Activated CD4-positive, alpha-beta memory T cell treated with anti-CD3 and anti-CD28 coated beads for 36 hours (primary cell): ENCODE measurements at regions of chr20 and their contacts with region 1.

Region 1: GRCh38 chr20:59159493-59160376 is 3.9 kb upstream of the ZNF831 start:
- DNase-seq: peak; percentile 80
- H3K4me3 Mint-ChIP-seq: peak overlapping the region; percentile 83
- H3K27ac Mint-ChIP-seq: peak overlapping the region; percentile 96
- H3K4me1 Mint-ChIP-seq: peaks cover 87% of the 10 kb centered on the region
- H3K27me3 Mint-ChIP-seq: no peaks in the 10 kb centered on the region

Region 2: GRCh38 chr20:59042796-59043660 is 116.7 kb before region 1 on chr20:
- CTCF ChIA-PET with region 1: no interaction called
- POLR2A ChIA-PET with region 1: no interaction called
- intact Hi-C with region 1: loop called (anchors 2 kb)
- DNase-seq: peak; percentile 96
- H3K4me3 Mint-ChIP-seq: peak overlapping the region; percentile 92
- H3K27ac Mint-ChIP-seq: peak overlapping the region; percentile 88
- H3K4me1 Mint-ChIP-seq: peaks cover 55% of the 10 kb centered on the region
- H3K27me3 Mint-ChIP-seq: no peaks in the 10 kb centered on the region

Region 3: DNA sequence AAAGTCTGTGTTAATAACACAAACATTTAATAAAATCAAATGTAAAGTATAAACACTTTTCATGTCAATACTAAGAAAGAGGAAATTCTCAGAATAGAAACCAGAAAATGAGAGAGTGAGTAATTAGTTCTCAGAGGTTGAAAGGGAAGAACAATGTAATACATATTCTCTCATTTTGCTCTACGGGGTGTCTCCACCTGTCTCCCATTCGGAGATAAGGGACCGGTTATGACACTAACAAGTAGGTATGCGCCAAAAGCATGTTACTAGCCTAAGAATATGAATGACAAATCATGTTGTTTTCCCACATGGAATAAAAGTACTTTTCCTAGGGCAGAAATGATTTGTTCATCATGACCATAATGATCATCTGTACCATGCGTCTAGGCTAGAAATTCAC is 81.5 kb before region 1 on chr20:
- CTCF ChIA-PET with region 1: no interaction called
- POLR2A ChIA-PET with region 1: no interaction called
- intact Hi-C with region 1: no loop called
- DNase-seq: no peak
- H3K4me3 Mint-ChIP-seq: no peak overlapping the region
- H3K27ac Mint-ChIP-seq: no peak overlapping the region
- H3K4me1 Mint-ChIP-seq: peaks cover 45% of the 10 kb centered on the region
- H3K27me3 Mint-ChIP-seq: peaks cover 23% of the 10 kb centered on the region

Region 4: GRCh38 chr20:59120491-59120890 is 39.2 kb before region 1 on chr20:
- CTCF ChIA-PET with region 1: interaction called, 15 read pairs
- POLR2A ChIA-PET with region 1: interaction called, 22 read pairs
- intact Hi-C with region 1: no loop called
- DNase-seq: peak; percentile 65
- H3K4me3 Mint-ChIP-seq: no peak overlapping the region
- H3K27ac Mint-ChIP-seq: peak overlapping the region; percentile 94
- H3K4me1 Mint-ChIP-seq: peaks cover 71% of the 10 kb centered on the region
- H3K27me3 Mint-ChIP-seq: no peaks in the 10 kb centered on the region

Region 5: DNA sequence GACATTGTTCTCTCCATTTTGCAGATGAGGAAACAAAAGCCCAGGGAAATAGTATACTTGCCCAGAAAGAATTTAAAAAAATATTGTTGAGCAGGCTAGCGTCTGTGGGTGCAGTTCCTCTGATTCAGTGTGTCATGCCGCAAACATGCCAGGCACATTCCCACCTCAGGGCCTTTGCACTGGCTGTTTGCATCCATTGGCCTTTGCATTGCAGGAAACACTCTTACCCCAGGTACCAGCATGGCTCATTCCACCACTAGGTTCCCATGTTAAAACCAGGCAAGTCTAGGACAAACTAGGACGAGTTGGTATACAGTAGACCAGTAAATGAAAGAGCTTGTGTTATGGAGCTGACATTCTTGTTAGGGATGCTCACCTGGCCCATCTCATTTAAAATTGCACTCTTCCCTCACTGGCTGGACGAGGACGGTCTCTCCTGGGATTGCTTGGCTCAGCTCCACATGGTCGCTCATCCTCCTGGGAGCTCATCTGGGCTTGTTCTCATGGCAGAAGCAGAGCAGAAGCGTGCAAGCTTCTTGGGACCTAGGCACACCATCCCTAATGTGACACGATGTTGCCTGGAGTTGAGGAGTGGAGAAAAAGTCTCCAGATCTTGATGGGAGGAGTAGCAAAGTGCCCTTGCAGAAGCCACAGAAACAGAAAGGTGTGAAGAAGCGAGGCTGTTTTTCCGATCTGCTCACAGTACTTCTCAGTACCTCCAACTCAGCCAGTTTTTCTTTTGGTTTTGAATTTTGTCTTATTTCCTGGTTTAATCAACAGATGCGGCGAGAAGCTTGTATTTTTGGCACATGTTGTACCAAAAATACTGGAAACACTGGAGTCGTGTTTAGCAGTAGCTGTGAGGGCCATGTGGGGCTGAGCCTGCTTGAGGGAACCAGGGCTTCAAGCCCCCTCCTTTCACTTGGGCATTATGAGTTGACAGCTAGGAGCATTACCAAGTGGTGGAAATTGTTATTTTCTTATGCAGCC is 17.8 kb after region 1 on chr20:
- CTCF ChIA-PET with region 1: interaction called, 5 read pairs
- POLR2A ChIA-PET with region 1: interaction called, 12 read pairs
- intact Hi-C with region 1: no loop called
- DNase-seq: peak; percentile 63
- H3K4me3 Mint-ChIP-seq: peak overlapping the region; percentile 67
- H3K27ac Mint-ChIP-seq: peak overlapping the region; percentile 93
- H3K4me1 Mint-ChIP-seq: peaks cover 84% of the 10 kb centered on the region
- H3K27me3 Mint-ChIP-seq: no peaks in the 10 kb centered on the region

Region 6: DNA sequence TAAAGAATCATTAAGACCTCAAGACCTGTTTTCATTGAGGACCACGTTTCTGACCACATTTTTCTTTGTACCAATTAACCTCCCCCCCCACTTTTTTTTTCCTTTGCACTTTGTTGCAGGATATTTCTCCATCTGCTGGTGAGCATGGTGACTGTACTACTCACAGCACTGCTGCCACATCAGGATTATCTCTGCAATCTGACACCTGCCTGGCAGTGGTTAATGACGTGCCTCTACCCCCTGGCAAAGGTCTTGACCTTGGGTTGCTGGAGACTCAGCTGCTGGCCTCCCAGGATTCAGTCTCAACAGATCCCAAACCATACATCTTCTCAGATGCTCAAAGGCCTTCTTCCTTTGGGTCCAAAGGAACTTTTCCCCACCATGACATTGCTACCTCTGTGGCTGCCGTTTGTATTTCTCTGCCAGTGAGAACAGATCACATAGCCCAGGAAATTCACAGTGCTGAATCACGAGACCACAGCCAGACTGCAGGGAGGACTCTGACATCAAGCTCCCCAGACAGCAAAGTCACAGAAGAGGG is 94.1 kb after region 1 on chr20:
- CTCF ChIA-PET with region 1: no interaction called
- POLR2A ChIA-PET with region 1: interaction called, 4 read pairs
- intact Hi-C with region 1: loop called (anchors 5 kb)
- DNase-seq: peak; percentile 68
- H3K4me3 Mint-ChIP-seq: peak overlapping the region; percentile 36
- H3K27ac Mint-ChIP-seq: peak overlapping the region; percentile 90
- H3K4me1 Mint-ChIP-seq: peaks cover 65% of the 10 kb centered on the region
- H3K27me3 Mint-ChIP-seq: no peaks in the 10 kb centered on the region

Region 7: DNA sequence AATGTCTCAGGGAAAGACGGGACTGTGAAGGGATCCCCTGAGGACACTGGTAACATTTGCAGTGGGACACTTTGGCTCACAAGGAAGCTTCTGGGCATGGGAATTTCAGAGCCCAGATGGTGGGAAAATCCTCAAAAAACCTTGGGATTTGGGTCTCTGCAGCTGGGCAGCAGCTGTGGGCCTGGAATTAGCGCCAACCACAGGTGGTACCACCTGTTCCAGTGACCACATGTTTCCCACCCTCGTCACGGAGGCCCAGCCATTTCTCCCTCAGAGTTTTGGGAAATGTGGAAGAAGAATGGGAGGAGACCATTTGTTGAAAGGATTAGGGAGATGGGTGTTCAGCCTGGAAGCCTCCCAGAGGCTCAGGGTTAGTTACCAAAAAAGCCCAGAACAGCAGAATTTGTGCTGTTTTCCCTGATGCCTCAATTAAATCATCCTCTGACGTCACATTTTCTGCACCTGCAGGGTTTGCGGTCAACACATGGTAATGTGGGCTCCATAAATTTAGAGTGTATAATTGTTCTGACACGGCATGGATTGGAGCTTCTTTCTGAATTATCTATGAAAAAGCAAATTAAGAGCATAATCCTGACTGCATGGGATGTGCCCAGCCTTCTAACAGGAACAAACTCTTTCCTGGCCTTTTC is 175.0 kb after region 1 on chr20:
- CTCF ChIA-PET with region 1: no interaction called
- POLR2A ChIA-PET with region 1: no interaction called
- intact Hi-C with region 1: no loop called
- DNase-seq: no peak
- H3K4me3 Mint-ChIP-seq: no peak overlapping the region
- H3K27ac Mint-ChIP-seq: no peak overlapping the region
- H3K4me1 Mint-ChIP-seq: no peaks in the 10 kb centered on the region
- H3K27me3 Mint-ChIP-seq: peaks cover 2% of the 10 kb centered on the region

Region 8: GRCh38 chr20:59351414-59352040 is 191.8 kb after region 1 on chr20:
- CTCF ChIA-PET with region 1: no interaction called
- POLR2A ChIA-PET with region 1: no interaction called
- intact Hi-C with region 1: no loop called
- DNase-seq: no peak
- H3K4me3 Mint-ChIP-seq: no peak overlapping the region
- H3K27ac Mint-ChIP-seq: no peak overlapping the region
- H3K4me1 Mint-ChIP-seq: peaks cover 11% of the 10 kb centered on the region
- H3K27me3 Mint-ChIP-seq: no peaks in the 10 kb centered on the region